MCF 10A (cell line): ENCODE measurements at regions of chr3 and their contacts with region 1.

Region 1: GRCh38 chr3:108914774-108915641 is 38.7 kb downstream of the GUCA1C start:
- DNase-seq: peak; percentile 87
- H3K4me3 Mint-ChIP-seq: no peak overlapping the region
- H3K27ac Mint-ChIP-seq: no peak overlapping the region
- H3K4me1 Mint-ChIP-seq: peaks cover 21% of the 10 kb centered on the region
- H3K27me3 Mint-ChIP-seq: no peaks in the 10 kb centered on the region
- CTCF ChIP-seq: peak; percentile 86

Region 2: DNA sequence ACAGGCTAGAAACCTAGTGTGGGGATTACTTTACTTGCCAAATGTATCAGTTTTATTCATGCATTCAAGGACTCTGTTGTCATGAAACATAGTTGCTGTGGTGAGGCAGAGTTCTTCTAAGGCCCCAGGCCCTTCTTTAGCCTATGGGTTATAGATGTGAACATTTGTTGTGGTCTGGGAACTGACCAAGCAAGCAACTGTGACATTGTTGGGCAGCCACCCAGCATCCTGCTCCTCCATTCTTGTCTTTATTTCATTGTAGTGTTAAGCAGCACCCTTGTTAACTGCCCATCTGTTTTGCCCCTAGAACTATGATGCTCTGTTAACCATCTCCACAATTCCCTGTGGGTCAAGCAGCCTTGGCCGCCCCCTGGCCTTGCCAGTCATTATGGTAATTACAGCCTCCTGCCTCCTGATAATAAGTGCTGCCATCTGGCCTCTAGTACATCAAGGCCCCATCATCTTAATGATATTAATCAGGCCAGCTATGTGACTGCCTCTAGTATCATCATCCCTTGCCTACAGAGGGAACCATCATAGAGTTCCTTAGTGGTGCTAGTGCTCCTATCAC is 680.5 kb before region 1 on chr3:
- CTCF ChIA-PET with region 1: no interaction called
- POLR2A ChIA-PET with region 1: no interaction called
- intact Hi-C with region 1: no loop called
- DNase-seq: no peak
- H3K4me3 Mint-ChIP-seq: no peak overlapping the region
- H3K27ac Mint-ChIP-seq: no peak overlapping the region
- H3K4me1 Mint-ChIP-seq: no peaks in the 10 kb centered on the region
- H3K27me3 Mint-ChIP-seq: no peaks in the 10 kb centered on the region
- CTCF ChIP-seq: no peak

Region 3: GRCh38 chr3:108589146-108589997 is 325.6 kb before region 1 on chr3 and contains the starts of genes CIP2A and DZIP3:
- CTCF ChIA-PET with region 1: interaction called, 12 read pairs
- POLR2A ChIA-PET with region 1: interaction called, 3 read pairs
- intact Hi-C with region 1: no loop called
- DNase-seq: peak; percentile 93
- H3K4me3 Mint-ChIP-seq: peak within 1 kb of the TSS; percentile 98
- H3K27ac Mint-ChIP-seq: peak within 1 kb of the TSS; percentile 100
- H3K4me1 Mint-ChIP-seq: peaks cover 46% of the 10 kb centered on the region
- H3K27me3 Mint-ChIP-seq: no peaks in the 10 kb centered on the region
- CTCF ChIP-seq: no peak
- total RNA-seq, gene CIP2A: 15.5 and 23.9 TPM in 2 replicates
- total RNA-seq, gene DZIP3: 10.1 and 10.3 TPM in 2 replicates

Region 4: GRCh38 chr3:108669208-108669607 is 245.8 kb before region 1 on chr3:
- CTCF ChIA-PET with region 1: interaction called, 110 read pairs
- POLR2A ChIA-PET with region 1: no interaction called
- intact Hi-C with region 1: no loop called
- DNase-seq: no peak
- H3K4me3 Mint-ChIP-seq: no peak overlapping the region
- H3K27ac Mint-ChIP-seq: no peak overlapping the region
- H3K4me1 Mint-ChIP-seq: no peaks in the 10 kb centered on the region
- H3K27me3 Mint-ChIP-seq: no peaks in the 10 kb centered on the region
- CTCF ChIP-seq: no peak

Region 5: DNA sequence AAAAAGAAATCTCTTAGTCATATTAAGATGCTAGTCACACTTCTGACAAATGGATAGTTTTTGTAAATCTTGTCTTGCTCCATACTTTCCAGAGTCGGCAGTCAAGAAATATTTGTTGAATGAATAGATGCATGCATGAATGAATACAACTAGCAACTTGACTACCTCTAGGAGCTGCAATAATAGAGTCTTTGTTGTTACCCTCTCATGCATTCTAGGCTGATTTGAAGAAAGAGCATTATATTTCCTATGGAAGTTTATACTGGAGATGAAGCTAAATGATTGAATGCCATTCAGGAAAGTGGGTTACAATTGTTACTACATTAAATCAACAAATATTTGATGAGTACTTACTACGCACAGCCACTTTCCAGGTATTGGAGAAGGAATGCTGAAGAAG is 110.6 kb before region 1 on chr3:
- CTCF ChIA-PET with region 1: no interaction called
- POLR2A ChIA-PET with region 1: no interaction called
- intact Hi-C with region 1: no loop called
- DNase-seq: no peak
- H3K4me3 Mint-ChIP-seq: no peak overlapping the region
- H3K27ac Mint-ChIP-seq: no peak overlapping the region
- H3K4me1 Mint-ChIP-seq: no peaks in the 10 kb centered on the region
- H3K27me3 Mint-ChIP-seq: no peaks in the 10 kb centered on the region
- CTCF ChIP-seq: no peak

Region 6: DNA sequence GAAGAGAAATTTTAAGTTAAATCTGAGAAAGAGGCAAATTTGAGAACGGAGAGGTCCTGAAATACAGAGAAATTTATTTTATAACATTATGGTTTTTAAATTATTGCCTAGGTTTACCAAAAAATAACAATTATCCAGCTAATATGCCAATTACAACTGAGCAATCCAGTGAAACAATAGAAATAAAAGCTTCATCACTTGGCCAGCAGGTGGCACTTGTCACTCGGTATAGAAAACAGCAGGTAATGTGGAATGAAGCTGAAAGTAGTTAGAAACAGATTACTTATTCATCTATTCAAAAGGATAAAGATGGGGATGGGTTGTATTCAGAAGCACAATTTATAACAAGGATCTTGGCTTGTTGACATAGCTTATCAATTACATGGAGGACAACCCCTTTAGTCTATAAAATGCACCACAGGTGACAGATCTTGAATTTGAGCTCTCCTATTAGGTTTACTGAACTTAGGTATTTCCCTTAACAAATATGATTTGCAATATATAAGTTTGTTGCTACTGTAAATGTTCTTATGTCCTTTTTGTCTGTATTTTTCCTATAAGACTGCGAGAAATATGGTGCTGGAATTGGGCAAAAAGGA is 108.7 kb after region 1 on chr3:
- CTCF ChIA-PET with region 1: interaction called, 15 read pairs
- POLR2A ChIA-PET with region 1: no interaction called
- intact Hi-C with region 1: no loop called
- DNase-seq: peak; percentile 55
- H3K4me3 Mint-ChIP-seq: no peak overlapping the region
- H3K27ac Mint-ChIP-seq: no peak overlapping the region
- H3K4me1 Mint-ChIP-seq: no peaks in the 10 kb centered on the region
- H3K27me3 Mint-ChIP-seq: no peaks in the 10 kb centered on the region
- CTCF ChIP-seq: peak; percentile 71